ENCODE measurements at regions of chr3 and their contacts with region 1.

Region 1: DNA sequence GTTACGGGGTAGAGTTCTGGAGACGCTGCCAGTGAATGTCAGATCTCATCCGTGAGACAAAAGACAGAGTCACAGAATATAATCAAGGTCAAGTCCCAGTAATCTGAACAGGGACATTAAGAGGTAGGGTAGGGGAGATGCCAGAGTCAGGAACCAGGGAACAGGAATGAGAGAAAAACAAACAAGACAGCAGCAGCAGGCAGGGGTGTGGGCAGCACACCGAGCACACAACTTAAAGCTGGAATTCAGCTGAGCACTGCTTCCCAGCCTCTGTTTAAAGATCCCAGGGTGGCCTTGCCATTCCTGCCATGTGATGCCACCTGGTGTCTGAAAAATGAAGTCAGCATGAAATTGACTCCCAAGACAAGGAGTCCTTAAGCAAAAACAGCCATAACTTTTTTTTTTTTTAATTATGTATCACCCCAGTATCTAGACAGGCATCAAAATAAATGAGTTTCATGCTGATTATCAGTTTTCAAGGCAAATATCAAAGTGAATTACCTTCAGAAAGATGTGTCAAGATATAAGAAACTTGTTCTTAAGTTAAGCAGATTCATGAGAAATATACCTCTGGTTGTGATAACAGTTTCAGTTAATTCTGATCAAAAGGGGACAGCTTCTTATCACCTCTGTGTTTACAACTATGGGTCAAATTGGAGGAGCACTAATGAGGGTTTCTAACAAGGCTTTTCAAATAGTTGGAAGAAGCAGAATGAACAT is 203.7 kb downstream of the SLC9A9 start:
- DNase-seq: peak in 2 of 5 donors; percentile 26 to 35
- ATAC-seq: peak; percentile 75 to 87 (median 80)
- H3K4me3 ChIP-seq: no peak overlapping the region
- H3K27ac ChIP-seq: no peak overlapping the region
- H3K4me1 ChIP-seq: peaks cover 0 to 7% (median 0%) of the 10 kb centered on the region in 12 donors
- H3K27me3 ChIP-seq: no peaks in the 10 kb centered on the region
- CTCF ChIP-seq: peak; percentile 30 to 68 (median 55)
- POLR2A ChIP-seq: no peak

Region 2: DNA sequence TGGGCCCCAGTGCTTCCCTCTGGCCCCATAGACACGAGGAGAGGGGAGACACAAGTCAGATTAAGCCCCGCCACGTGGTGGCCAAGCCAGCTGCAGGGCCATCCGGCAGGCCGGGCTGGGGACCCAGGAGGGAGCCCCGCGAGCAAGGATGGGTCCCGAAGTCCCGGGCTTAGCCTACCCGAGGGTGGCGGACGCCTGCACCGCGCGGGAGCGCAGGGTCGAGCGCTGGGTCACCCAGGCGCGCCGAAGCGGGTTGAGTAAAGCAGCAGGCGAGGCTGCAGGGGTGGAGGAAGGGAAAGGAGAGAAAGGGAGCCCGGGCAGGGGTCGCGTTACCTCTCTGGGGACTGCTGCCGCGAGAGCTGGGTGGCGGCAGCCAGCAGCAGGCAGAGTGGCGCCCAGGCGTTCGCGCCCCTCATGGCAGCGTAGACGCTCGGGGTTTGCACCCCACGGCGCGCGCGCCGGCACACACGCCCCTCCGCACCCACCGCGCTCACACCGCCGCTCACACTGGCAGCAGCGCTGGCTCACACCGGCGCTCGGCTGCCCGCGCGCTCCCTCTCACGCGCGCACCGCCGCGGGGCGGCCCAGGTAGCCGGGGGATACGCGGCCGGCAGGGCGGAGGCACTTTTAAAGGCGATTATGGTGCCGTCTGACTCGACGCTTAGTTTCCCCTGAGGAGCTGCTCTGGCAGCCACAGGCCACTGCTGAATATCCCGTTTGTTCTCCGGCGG is 755.9 kb before region 1 on chr3 and contains the start of gene PCOLCE2:
- intact Hi-C with region 1: no loop called
- DNase-seq: peak; percentile 18 to 70 (median 57)
- ATAC-seq: peak; percentile 39 to 83 (median 74)
- H3K4me3 ChIP-seq: peak within 1 kb of the TSS; percentile 44 to 83 (median 72)
- H3K27ac ChIP-seq: peak within 1 kb of the TSS; percentile 66 to 90 (median 74)
- H3K4me1 ChIP-seq: peaks cover 0 to 40% (median 4%) of the 10 kb centered on the region in 12 donors
- H3K27me3 ChIP-seq: peaks cover 0 to 32% (median 0%) of the 10 kb centered on the region in 9 donors
- CTCF ChIP-seq: no peak
- POLR2A ChIP-seq: no peak
- total RNA-seq, gene PCOLCE2: 49.2 to 152 (median 70.7) TPM

Region 3: GRCh38 chr3:143040261-143040879 is 604.2 kb before region 1 on chr3:
- intact Hi-C with region 1: loop called in 1 of 10 experiments (anchors 10 kb)
- DNase-seq: no peak
- ATAC-seq: no peak
- H3K4me3 ChIP-seq: no peak overlapping the region
- H3K27ac ChIP-seq: no peak overlapping the region
- H3K4me1 ChIP-seq: peaks cover 0 to 9% (median 0%) of the 10 kb centered on the region in 12 donors
- H3K27me3 ChIP-seq: no peaks in the 10 kb centered on the region
- CTCF ChIP-seq: peak in 11 of 12 donors; percentile 7 to 49 (median 29)
- POLR2A ChIP-seq: no peak

Region 4: DNA sequence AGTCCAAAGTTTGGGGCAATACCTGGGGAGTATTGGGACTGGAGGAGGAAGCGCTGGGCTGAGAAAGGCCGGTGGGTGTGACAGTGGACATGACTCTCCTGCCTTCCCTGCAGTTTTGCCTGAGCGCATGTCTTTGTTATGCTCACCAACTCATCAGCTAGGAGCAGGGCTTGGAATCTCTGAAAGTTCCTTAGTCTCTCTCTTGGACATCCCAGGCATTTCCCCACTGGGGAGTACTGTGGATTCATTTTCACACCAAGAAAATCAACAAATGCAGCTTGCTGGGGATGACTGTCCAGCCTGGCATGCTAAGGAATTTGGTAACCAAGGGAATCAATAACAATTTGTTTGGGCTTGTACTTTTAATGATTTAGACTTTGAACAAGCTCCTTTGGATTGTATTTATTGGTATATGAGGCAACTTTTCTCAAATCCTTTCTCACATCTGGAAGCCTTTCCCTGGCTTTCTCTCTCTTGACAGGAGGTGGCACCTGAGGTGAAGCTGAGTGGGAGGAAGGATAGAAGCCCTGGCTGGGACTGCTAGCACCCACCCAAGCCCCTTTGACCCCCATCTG is 573.5 kb before region 1 on chr3:
- intact Hi-C with region 1: loop called in 2 of 10 experiments (anchors 10 kb)
- DNase-seq: no peak
- ATAC-seq: no peak
- H3K4me3 ChIP-seq: no peak overlapping the region
- H3K27ac ChIP-seq: no peak overlapping the region
- H3K4me1 ChIP-seq: no peaks in the 10 kb centered on the region
- H3K27me3 ChIP-seq: no peaks in the 10 kb centered on the region
- CTCF ChIP-seq: no peak
- POLR2A ChIP-seq: no peak

Region 5: GRCh38 chr3:143329567-143330211 is 314.8 kb before region 1 on chr3:
- intact Hi-C with region 1: loop called in 1 of 10 experiments (anchors 10 kb)
- DNase-seq: peak in 2 of 5 donors; percentile 32 to 59
- ATAC-seq: peak in 3 of 4 donors; percentile 42 to 73 (median 49)
- H3K4me3 ChIP-seq: no peak overlapping the region
- H3K27ac ChIP-seq: no peak overlapping the region
- H3K4me1 ChIP-seq: peaks cover 0 to 43% (median 13%) of the 10 kb centered on the region in 12 donors
- H3K27me3 ChIP-seq: no peaks in the 10 kb centered on the region
- CTCF ChIP-seq: no peak
- POLR2A ChIP-seq: no peak

Region 6: GRCh38 chr3:143443851-143444331 is 200.6 kb before region 1 on chr3:
- intact Hi-C with region 1: loop called in 3 of 10 experiments (anchors 10 kb)
- DNase-seq: peak in 4 of 5 donors; percentile 60 to 75 (median 70)
- ATAC-seq: peak; percentile 83 to 98 (median 96)
- H3K4me3 ChIP-seq: no peak overlapping the region
- H3K27ac ChIP-seq: peak overlapping the region in 11 of 12 donors; percentile 23 to 80 (median 62)
- H3K4me1 ChIP-seq: peaks cover 0 to 26% (median 9%) of the 10 kb centered on the region in 12 donors
- H3K27me3 ChIP-seq: no peaks in the 10 kb centered on the region
- CTCF ChIP-seq: no peak
- POLR2A ChIP-seq: no peak

Region 7: GRCh38 chr3:143693506-143693905 is 49.0 kb after region 1 on chr3:
- intact Hi-C with region 1: no loop called
- DNase-seq: no peak
- ATAC-seq: no peak
- H3K4me3 ChIP-seq: no peak overlapping the region
- H3K27ac ChIP-seq: no peak overlapping the region
- H3K4me1 ChIP-seq: no peaks in the 10 kb centered on the region
- H3K27me3 ChIP-seq: no peaks in the 10 kb centered on the region
- CTCF ChIP-seq: no peak
- POLR2A ChIP-seq: no peak